ENCODE measurements at regions of chr20 and their contacts with region 1.

Region 1: GRCh38 chr20:3679749-3680700 is 1.8 kb downstream of the ADAM33 start:
- DNase-seq: no peak
- H3K4me3 ChIP-seq: no peak overlapping the region
- H3K27ac ChIP-seq: no peak overlapping the region
- H3K4me1 ChIP-seq: peaks cover 3% of the 10 kb centered on the region
- H3K27me3 ChIP-seq: peaks cover 14% of the 10 kb centered on the region
- CTCF ChIP-seq: no peak

Region 2: DNA sequence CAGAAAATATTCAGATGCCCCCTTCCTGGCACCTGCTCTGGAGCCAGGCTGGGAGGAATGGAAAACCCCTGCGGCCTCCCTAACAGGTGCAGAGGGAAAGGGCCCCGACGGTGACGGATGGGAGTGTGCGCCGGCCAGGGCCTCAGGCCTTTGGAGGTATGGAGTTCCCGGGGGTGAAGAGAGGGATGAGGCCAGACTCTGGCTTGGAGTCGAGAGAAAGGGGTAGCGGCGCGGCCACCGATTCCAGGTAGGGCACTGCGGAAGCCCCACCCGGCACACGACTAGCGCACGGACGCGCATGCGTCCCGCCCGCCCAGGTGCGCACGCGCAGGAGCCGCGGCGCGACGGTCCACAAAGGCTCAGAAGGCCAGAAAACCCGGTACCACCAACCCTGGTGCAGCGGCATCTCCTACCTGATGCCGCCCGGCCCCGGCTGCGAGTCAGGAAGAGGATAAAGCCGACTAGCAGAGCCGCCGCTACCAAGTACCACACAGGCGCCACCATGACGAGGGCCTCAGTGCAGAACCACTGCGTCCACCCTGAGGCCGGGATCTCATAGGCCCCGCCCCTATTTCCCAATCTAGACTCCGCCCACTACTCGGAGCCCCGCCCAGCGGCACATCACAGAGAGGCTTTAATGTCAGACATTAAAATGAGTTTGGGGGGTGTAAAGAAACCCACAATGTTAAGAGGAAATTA is 475.8 kb before region 1 on chr20 and contains the start of gene DDRGK1:
- CTCF ChIA-PET with region 1: interaction called, 11 read pairs
- POLR2A ChIA-PET with region 1: no interaction called
- intact Hi-C with region 1: no loop called
- DNase-seq: peak; percentile 91
- H3K4me3 ChIP-seq: peak within 1 kb of the TSS; percentile 71
- H3K27ac ChIP-seq: peak within 1 kb of the TSS; percentile 87
- H3K4me1 ChIP-seq: peaks cover 8% of the 10 kb centered on the region
- H3K27me3 ChIP-seq: no peaks in the 10 kb centered on the region
- CTCF ChIP-seq: no peak
- total RNA-seq, gene DDRGK1: 60.2 and 72.0 TPM in 2 replicates

Region 3: DNA sequence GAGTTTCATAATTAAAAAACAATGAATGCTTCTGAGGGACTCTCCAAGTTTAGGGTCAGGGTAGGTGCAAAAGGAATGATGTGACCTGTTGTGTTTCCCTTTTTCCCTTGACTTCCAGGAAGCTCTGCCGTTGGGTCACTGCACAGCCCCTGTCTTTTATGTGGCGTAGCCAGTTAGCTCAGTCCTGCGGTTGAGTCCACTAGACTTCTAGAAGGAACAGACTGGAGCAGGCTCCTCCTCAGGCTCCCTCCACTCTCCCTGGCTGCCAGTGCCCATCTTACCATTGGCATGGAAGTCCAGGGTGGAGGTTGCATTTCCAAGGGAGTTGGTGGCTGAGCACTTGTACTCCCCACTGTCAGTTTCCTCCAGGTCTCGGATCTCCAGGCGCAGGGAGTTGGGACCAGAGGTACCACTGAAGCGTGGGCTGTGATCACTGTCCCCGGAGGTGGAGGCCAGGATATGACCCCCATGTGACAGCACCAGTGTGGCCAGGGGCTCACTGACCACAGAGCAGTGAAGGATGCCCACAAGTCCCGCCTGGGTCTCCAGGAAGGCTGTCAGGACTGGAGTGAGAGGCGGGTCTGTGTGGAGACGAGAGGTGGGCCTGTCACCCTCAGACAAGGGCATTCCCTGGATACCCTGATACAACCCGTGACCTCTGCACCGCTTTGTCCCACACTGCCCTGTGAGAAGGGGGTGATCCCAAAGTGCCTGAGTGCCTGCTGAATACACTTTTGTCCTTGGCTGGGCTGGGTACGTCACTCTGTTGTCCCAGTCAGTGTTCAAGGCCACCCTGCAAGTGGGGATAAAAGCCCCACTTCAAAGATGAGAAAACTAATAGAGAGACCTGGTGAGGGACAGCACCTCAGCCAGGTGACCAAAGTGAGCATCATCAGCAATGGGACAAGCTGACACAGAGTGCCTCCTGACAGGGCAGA is 21.3 kb after region 1 on chr20:
- CTCF ChIA-PET with region 1: interaction called, 11 read pairs
- POLR2A ChIA-PET with region 1: no interaction called
- intact Hi-C with region 1: no loop called
- DNase-seq: no peak
- H3K4me3 ChIP-seq: no peak overlapping the region
- H3K27ac ChIP-seq: no peak overlapping the region
- H3K4me1 ChIP-seq: no peaks in the 10 kb centered on the region
- H3K27me3 ChIP-seq: no peaks in the 10 kb centered on the region
- CTCF ChIP-seq: no peak

Region 4: DNA sequence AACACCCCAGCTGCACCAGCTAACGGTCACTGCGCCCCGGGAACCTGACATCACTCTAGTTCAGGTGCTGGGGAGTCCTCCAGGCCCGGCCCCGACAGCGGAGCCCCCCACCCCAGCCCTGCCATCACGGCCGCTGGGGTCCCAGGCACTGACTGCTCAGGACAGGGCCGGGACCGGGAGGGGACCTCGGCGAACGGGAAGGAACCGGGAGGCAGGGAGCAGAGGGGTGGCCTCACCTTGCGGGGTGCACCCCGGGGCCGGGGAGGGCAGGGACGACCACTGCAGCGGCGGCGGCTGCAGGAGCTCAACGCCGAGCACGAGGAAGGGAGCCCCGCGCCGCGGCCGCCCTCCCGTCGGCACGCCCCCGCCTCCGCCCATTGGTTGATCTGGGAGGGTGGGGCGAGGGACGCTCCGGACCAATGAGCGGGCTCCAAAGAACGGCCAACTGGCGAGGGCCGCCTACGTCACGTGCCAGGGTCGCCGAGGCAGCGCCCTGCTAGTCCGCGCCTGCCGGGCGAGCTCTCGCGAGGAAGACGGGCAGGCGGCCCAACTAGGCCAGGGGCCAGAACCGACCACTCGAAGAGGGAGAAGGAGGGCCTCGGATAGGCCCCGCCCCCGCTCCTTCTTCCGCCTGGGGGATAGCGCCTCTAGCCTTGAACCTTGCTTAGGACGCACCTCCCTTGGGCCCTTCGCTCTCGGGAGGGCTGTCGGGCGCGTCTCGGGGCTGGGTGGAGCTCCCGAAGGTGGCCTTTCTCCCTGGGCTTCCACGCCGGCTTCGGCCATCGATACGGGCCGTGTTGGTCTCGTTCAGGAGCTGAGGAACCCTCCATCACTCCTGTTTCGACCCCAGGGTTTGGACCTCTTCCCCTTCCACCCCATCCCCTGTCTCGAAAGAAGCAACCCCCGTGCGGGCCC is 87.7 kb after region 1 on chr20 and contains the start of gene ADISSP:
- CTCF ChIA-PET with region 1: no interaction called
- POLR2A ChIA-PET with region 1: no interaction called
- intact Hi-C with region 1: loop called (anchors 1 kb)
- DNase-seq: peak; percentile 99
- H3K4me3 ChIP-seq: peak within 1 kb of the TSS; percentile 82
- H3K27ac ChIP-seq: peak within 1 kb of the TSS; percentile 70
- H3K4me1 ChIP-seq: peaks cover 18% of the 10 kb centered on the region
- H3K27me3 ChIP-seq: no peaks in the 10 kb centered on the region
- CTCF ChIP-seq: peak; percentile 24; the same call in 1 of the 2 replicates
- total RNA-seq, gene ADISSP: 75.7 and 80.3 TPM in 2 replicates

Region 5: GRCh38 chr20:4082406-4083097 is 402.5 kb after region 1 on chr20:
- CTCF ChIA-PET with region 1: interaction called, 10 read pairs
- POLR2A ChIA-PET with region 1: no interaction called
- intact Hi-C with region 1: loop called (anchors 10 kb)
- DNase-seq: peak; percentile 52
- H3K4me3 ChIP-seq: no peak overlapping the region
- H3K27ac ChIP-seq: peak overlapping the region; percentile 28
- H3K4me1 ChIP-seq: peaks cover 16% of the 10 kb centered on the region
- H3K27me3 ChIP-seq: no peaks in the 10 kb centered on the region
- CTCF ChIP-seq: no peak

Measured in A673 (cell line).